Endothelial cell of umbilical vein (primary cell): ENCODE measurements at regions of chr20 and their contacts with region 1.

Region 1: DNA sequence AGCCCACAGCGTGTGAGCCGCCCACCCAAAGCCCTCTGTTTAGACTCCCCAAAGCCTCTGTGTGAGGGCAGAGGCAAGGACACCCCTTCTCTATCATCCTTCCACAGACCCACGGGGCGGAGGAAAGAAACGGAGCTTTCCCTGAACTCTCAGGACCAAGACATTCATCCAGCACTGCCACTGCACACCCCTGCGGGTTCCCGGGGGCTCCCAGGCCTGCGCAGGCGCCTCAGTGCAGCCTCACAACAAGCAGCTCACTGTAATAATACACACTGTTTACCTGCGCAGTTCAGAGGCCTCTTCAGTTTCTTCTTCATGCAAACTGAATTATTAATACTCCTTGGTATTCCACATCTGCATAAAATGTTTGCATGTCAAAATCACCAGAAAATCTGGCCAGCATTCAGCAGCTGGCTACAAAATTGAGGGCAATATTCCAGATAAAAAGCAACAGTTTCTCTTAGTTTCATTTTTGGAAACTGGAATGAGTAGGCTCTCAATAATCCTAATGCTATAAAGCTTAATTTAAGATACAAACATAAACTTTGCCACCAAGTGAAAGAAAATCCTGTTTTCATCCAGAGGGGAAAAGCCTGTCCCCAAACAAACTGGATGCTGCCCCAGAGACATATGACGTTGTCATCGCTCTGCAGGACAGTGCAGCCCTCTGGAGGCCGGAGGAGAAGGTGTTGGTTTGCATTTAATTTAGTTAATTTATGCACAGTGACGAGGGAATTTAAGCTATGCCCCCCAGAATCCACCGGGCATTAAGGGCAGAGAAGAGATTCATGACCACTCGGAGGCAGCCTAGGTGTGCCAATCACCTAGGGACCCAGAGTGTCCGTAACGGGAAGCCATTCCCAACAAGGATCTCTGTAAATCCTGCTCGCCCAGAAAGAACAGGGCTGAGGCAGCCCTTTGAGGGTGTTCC is 45.3 kb downstream of the NINL start:
- DNase-seq: no peak
- H3K4me3 ChIP-seq: no peak overlapping the region
- H3K27ac ChIP-seq: no peak overlapping the region
- H3K4me1 ChIP-seq: no peaks in the 10 kb centered on the region
- H3K27me3 ChIP-seq: no peaks in the 10 kb centered on the region
- CTCF ChIP-seq: peak in 1 of 2 donors; percentile 31
- POLR2A ChIP-seq: no peak

Region 2: GRCh38 chr20:25508078-25508770 is 31.8 kb before region 1 on chr20:
- CTCF ChIA-PET with region 1: interaction called, 15 read pairs
- POLR2A ChIA-PET with region 1: no interaction called
- dilution Hi-C with region 1: no loop called
- intact Hi-C with region 1: no loop called
- DNase-seq: peak; percentile 85
- H3K4me3 ChIP-seq: no peak overlapping the region
- H3K27ac ChIP-seq: peak overlapping the region; percentile 10
- H3K4me1 ChIP-seq: peaks cover 19% of the 10 kb centered on the region
- H3K27me3 ChIP-seq: no peaks in the 10 kb centered on the region
- CTCF ChIP-seq: no peak
- POLR2A ChIP-seq: no peak

Region 3: GRCh38 chr20:25551413-25552215 is 11.6 kb after region 1 on chr20:
- CTCF ChIA-PET with region 1: interaction called, 10 read pairs
- POLR2A ChIA-PET with region 1: no interaction called
- dilution Hi-C with region 1: no loop called
- intact Hi-C with region 1: no loop called
- DNase-seq: peak; percentile 30
- H3K4me3 ChIP-seq: no peak overlapping the region
- H3K27ac ChIP-seq: no peak overlapping the region
- H3K4me1 ChIP-seq: no peaks in the 10 kb centered on the region
- H3K27me3 ChIP-seq: no peaks in the 10 kb centered on the region
- CTCF ChIP-seq: no peak
- POLR2A ChIP-seq: no peak

Region 4: GRCh38 chr20:25586877-25587276 is 46.9 kb after region 1 on chr20:
- CTCF ChIA-PET with region 1: no interaction called
- POLR2A ChIA-PET with region 1: no interaction called
- dilution Hi-C with region 1: no loop called
- intact Hi-C with region 1: no loop called
- DNase-seq: no peak
- H3K4me3 ChIP-seq: no peak overlapping the region
- H3K27ac ChIP-seq: no peak overlapping the region
- H3K4me1 ChIP-seq: peaks cover 4% of the 10 kb centered on the region
- H3K27me3 ChIP-seq: no peaks in the 10 kb centered on the region
- CTCF ChIP-seq: no peak
- POLR2A ChIP-seq: no peak